Heart right ventricle (tissue), 16 donors: ENCODE measurements at regions of chr9 and their contacts with region 1.

Region 1: DNA sequence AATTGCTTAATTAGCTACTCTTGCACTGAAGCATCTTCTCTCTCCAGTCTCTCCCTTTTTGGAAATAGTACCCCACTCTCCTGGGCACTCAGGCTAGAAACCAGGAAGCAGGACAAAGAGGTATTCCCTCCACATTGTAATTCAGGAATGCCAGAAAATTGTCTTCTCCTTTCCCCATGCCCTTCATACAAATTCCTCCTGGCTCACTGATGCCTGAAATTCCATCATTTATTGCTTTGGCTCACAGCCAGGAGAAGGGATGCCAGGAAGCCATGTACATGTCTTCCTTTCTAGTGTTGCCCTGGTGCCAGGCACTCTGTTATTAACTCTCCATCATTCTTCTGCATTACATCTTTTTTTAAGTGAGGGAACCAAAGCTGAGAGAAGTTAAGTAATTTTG is 716.5 kb upstream of the C9orf72 start:
- DNase-seq: no peak
- ATAC-seq: no peak
- H3K4me3 ChIP-seq: no peak overlapping the region
- H3K27ac ChIP-seq: no peak overlapping the region
- H3K4me1 ChIP-seq: no peaks in the 10 kb centered on the region
- H3K27me3 ChIP-seq: no peaks in the 10 kb centered on the region
- CTCF ChIP-seq: no peak

Region 2: GRCh38 chr9:28024676-28025075 is 265.1 kb before region 1 on chr9:
- intact Hi-C with region 1: no loop called
- DNase-seq: no peak
- ATAC-seq: no peak
- H3K4me3 ChIP-seq: no peak overlapping the region
- H3K27ac ChIP-seq: no peak overlapping the region
- H3K4me1 ChIP-seq: no peaks in the 10 kb centered on the region
- H3K27me3 ChIP-seq: no peaks in the 10 kb centered on the region
- CTCF ChIP-seq: no peak

Region 3: DNA sequence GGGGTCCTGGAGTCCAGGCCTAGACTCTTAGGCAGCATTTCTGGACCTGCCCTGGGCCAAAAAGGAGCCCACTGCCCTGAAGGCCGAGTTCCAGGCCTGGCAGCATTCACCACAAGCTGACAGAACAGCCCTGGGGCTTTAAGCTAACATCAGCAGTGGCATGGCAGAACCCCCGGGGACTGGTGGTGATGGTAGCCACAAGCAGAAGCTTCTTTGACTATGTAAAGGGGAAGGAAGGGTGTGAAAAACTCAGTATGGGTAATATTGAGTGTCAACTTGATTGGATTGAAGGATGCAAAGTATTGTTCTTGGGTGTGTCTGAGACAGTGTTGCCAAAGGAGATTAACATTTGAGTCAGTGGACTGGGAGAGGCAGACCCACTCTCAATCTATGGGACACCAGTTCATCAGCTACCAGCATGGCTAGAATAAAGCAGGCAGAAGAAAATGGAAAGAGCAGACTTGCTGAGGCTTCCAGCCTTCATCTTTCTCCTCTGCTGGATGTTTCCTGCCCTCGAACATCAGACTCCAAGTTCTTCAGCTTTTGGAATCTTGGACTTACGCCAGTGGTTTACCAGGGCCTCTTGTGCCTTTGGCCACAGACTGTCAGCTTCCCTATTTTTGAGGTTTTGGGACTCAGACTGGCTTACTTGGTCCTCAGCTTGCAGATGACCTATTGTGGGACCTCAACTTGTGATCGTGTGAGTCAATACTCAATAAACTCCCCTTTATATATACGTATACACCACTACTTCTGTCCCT is 55.4 kb before region 1 on chr9:
- intact Hi-C with region 1: loop called in 1 of 10 experiments (anchors 10 kb)
- DNase-seq: no peak
- ATAC-seq: no peak
- H3K4me3 ChIP-seq: no peak overlapping the region
- H3K27ac ChIP-seq: no peak overlapping the region
- H3K4me1 ChIP-seq: no peaks in the 10 kb centered on the region
- H3K27me3 ChIP-seq: no peaks in the 10 kb centered on the region
- CTCF ChIP-seq: no peak

Region 4: DNA sequence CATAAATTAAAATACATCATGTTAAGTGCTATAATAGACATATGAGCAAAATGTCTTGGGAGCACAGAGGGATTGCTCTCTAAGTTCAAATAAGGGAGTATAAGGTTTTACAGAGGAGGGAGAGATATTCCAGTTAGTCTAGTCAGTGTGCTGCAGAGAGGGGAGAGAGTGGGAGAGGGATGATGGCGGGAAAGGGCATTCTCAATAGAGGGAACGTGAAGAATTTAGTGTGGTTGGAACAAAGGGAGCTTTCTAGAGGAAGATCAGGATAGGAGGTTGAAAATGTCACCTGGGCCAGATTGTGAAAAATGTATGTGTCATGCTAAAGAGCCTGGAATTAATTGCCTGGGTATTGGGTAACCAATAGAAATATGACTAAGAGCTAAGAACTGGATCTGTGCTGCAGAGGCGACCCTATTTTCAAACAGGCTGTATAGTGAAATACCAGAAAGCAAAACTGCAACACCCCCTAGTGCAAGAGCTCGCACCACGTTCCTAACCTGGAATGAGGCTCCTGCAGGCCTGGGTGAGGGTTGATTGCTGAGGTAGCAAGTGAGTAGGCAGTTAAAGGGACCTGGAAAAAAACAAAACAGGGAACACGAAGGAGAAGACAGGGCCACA is 75.4 kb after region 1 on chr9:
- intact Hi-C with region 1: no loop called
- DNase-seq: no peak
- ATAC-seq: no peak
- H3K4me3 ChIP-seq: no peak overlapping the region
- H3K27ac ChIP-seq: no peak overlapping the region
- H3K4me1 ChIP-seq: no peaks in the 10 kb centered on the region
- H3K27me3 ChIP-seq: no peaks in the 10 kb centered on the region
- CTCF ChIP-seq: no peak